ENCODE measurements at regions of chr16 and their contacts with region 1.

Region 1: GRCh38 chr16:14321542-14321941 is 250.4 kb downstream of the MRTFB start:
- DNase-seq: peak; percentile 52 to 56
- ATAC-seq: peak; percentile 61 to 63; a peak in 5 of 6 replicates
- H3K4me3 ChIP-seq: no peak overlapping the region
- H3K27ac ChIP-seq: peak overlapping the region in 1 of 2 experiments; percentile 46; a peak in 2 of 6 replicates
- H3K4me1 ChIP-seq: peaks cover 74% of the 10 kb centered on the region
- CTCF ChIP-seq: no peak
- EP300 ChIP-seq: no peak
- POLR2A ChIP-seq: no peak
- RAD21 ChIP-seq: no peak

Region 2: GRCh38 chr16:14310519-14310991 is 11.0 kb before region 1 on chr16:
- CTCF ChIA-PET with region 1: interaction called, 14 read pairs
- POLR2A ChIA-PET with region 1: no interaction called
- DNase-seq: peak; percentile 56 to 63
- ATAC-seq: peak; percentile 37 to 49; a peak in 5 of 6 replicates
- H3K4me3 ChIP-seq: peak overlapping the region; percentile 98
- H3K27ac ChIP-seq: peak overlapping the region; percentile 99 to 100
- H3K4me1 ChIP-seq: peaks cover 95% of the 10 kb centered on the region
- CTCF ChIP-seq: peak; percentile 16; the same call in 1 of the 3 replicates
- EP300 ChIP-seq: no peak
- POLR2A ChIP-seq: no peak
- RAD21 ChIP-seq: 0 out of 5 replicates have a peak, but pooled peaks of 1 of the 2 experiments have one; percentile 12

Region 3: GRCh38 chr16:14354551-14355351 is 33.2 kb after region 1 on chr16:
- CTCF ChIA-PET with region 1: no interaction called
- POLR2A ChIA-PET with region 1: no interaction called
- DNase-seq: peak in 1 of 2 experiments; percentile 49
- ATAC-seq: no peak; a peak in 1 of 6 replicates
- H3K4me3 ChIP-seq: no peak overlapping the region
- H3K27ac ChIP-seq: peak overlapping the region; percentile 47 to 98; a peak in 5 of 6 replicates
- H3K4me1 ChIP-seq: peaks cover 30% of the 10 kb centered on the region
- CTCF ChIP-seq: no peak
- EP300 ChIP-seq: no peak
- POLR2A ChIP-seq: no peak
- RAD21 ChIP-seq: no peak

Region 4: DNA sequence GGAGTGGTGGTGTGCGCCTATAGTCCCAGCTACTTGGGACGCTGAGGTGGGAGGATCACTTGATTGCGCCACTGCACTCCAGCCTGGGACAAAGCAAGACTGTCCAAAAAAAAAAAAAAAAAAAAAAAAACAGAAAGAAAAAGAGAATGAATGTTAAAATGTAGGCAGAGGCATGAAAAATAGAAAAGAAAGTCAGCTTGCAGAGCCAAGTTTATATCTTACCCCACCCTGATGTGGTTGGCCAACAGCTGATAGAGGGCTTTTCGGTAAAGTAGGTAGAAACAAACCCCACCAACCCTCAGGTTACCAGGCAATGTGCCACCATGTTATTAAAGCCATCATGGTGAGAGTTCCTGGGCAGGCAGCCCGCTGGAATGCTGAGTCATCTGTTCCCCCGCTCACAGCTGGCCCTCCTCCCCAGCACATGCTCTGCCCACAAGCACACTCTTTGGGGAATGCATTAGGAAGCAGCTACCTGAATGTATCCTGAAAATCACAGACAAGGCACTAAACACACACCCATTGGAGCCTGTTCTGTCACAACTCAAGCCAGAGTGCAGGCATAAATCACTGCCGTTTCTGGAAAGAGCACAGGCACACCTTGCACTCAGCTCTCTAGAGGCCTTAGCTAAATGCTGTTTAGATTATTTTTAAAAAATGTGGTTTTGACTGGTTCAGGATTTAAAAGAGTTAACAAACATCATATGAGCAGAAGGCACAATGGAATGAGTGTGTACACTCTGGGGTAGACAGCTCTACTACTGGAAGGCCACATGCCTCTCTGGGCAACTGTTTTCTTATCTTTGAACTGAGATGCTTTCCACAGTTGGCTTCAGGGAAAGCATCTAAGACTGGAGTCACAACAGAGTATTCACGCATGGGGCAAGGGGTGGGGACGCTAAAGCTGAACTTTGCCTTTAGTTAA is 180.1 kb after region 1 on chr16:
- CTCF ChIA-PET with region 1: no interaction called
- POLR2A ChIA-PET with region 1: no interaction called
- DNase-seq: peak; percentile 78 to 95
- ATAC-seq: peak; percentile 84 to 87
- H3K4me3 ChIP-seq: no peak overlapping the region
- H3K27ac ChIP-seq: peak overlapping the region; percentile 94 to 95
- H3K4me1 ChIP-seq: peaks cover 99% of the 10 kb centered on the region
- CTCF ChIP-seq: no peak
- EP300 ChIP-seq: peak; percentile 14 to 47; a peak in 1 of 5 replicates
- POLR2A ChIP-seq: no peak
- RAD21 ChIP-seq: no peak

Measured in A549 (cell line).